A673 (cell line): ENCODE measurements at regions of chr13 and their contacts with region 1.

Region 1: DNA sequence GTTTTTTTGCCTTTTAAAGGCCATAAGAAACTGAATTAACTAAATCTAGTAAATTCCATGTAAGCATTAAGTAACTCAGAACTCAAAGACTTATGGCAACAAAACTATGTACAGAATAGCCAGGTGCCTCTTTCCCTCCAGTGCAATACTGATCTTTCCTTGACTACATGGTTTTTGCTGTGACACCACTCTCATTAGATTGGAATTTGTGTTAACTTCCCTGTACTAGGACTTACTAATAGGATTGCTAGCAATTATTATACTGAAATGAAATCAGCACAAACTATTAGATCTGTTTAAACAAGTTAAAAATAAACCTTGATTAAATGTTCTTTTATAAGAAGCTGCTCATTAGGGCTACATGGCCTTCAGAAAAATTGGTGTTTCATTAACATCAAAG is 96.3 kb downstream of the DACH1 start:
- DNase-seq: no peak
- H3K4me3 ChIP-seq: no peak overlapping the region
- H3K27ac ChIP-seq: no peak overlapping the region
- H3K4me1 ChIP-seq: peaks cover 35% of the 10 kb centered on the region
- H3K27me3 ChIP-seq: no peaks in the 10 kb centered on the region
- CTCF ChIP-seq: no peak

Region 2: DNA sequence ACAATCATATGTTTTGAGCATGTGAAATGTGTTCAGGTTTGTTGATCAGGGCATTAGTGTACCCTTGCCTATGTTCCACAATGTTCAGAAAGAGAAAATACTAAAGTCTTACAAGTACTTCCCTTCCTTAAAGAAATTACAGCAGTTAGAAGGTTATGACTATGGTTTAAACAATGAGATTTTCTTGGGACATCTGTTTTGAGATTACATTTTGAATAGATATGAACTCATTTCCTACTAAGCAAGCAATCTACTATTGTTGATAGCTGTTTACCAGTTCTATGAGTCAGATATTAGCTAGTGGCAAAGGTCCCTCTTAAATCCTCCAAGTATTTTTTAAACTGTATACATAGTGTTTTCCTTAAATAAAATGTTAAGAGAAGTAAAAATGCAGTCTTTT is 145.0 kb before region 1 on chr13:
- CTCF ChIA-PET with region 1: no interaction called
- POLR2A ChIA-PET with region 1: no interaction called
- intact Hi-C with region 1: loop called (anchors 5 kb)
- DNase-seq: peak; percentile 63
- H3K4me3 ChIP-seq: no peak overlapping the region
- H3K27ac ChIP-seq: no peak overlapping the region
- H3K4me1 ChIP-seq: peaks cover 43% of the 10 kb centered on the region
- H3K27me3 ChIP-seq: no peaks in the 10 kb centered on the region
- CTCF ChIP-seq: no peak

Region 3: GRCh38 chr13:71806886-71807285 is 36.2 kb after region 1 on chr13:
- CTCF ChIA-PET with region 1: interaction called, 11 read pairs
- POLR2A ChIA-PET with region 1: no interaction called
- intact Hi-C with region 1: no loop called
- DNase-seq: no peak
- H3K4me3 ChIP-seq: no peak overlapping the region
- H3K27ac ChIP-seq: no peak overlapping the region
- H3K4me1 ChIP-seq: peaks cover 3% of the 10 kb centered on the region
- H3K27me3 ChIP-seq: peaks cover under 1% of the 10 kb centered on the region
- CTCF ChIP-seq: no peak

Region 4: DNA sequence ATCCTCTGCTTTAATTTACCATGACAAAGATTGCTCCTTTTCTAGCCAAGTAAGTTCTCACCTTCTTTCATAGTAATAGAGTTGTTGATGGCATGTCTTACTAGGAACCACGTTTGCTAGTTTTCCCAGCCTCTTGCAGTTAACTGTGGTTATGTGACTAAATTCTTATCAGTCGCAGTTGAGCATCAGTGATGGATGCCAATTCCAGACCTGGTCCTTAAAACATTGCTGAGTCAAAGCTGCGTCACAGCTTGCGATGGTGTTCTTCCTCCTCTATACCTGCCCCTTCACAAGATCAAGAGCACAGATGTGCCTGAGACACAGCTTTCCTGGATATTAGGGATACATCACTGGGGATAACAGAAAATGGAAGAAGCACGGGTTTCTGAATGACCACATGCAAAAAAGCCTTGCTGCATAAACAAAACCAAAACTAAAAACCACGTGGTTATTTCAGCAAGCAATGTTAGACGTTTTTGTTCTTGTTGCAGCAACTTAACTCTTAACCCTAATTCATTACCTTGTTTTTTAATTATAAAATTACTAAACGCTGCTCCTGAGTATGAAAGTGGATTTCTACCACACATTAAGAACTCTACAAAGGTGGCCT is 193.9 kb after region 1 on chr13:
- CTCF ChIA-PET with region 1: no interaction called
- POLR2A ChIA-PET with region 1: no interaction called
- intact Hi-C with region 1: no loop called
- DNase-seq: no peak
- H3K4me3 ChIP-seq: no peak overlapping the region
- H3K27ac ChIP-seq: no peak overlapping the region
- H3K4me1 ChIP-seq: no peaks in the 10 kb centered on the region
- H3K27me3 ChIP-seq: peaks cover 72% of the 10 kb centered on the region
- CTCF ChIP-seq: no peak